CD8-positive, alpha-beta T cell (primary cell): ENCODE measurements at regions of chr12 and their contacts with region 1.

Region 1: DNA sequence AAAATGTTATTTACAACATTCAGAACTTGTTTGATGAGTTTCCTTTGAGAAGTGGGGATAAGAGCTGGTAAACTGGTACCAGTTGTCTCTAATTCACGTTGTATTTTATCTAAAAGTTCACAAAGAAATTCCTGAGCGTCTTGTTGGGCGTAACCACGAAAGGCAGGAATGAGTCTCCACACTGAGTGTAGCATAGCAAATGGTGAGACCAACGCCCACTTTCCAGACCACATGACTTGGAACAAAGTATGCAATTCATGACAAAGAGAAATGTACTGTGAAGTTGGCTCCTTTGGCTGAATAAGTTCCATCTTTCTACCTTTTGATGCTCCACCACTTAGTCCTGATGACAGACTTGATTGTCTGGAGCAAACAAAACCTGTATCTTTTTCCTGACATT is 18.4 kb downstream of the USP44 start:
- DNase-seq: no peak
- ATAC-seq: no peak
- H3K4me3 ChIP-seq: no peak overlapping the region
- H3K4me3 Mint-ChIP-seq: no peak overlapping the region
- H3K27ac ChIP-seq: no peak overlapping the region
- H3K27ac Mint-ChIP-seq: no peak overlapping the region
- H3K4me1 ChIP-seq: no peaks in the 10 kb centered on the region
- H3K4me1 Mint-ChIP-seq: peaks cover 12% of the 10 kb centered on the region
- H3K27me3 ChIP-seq: no peaks in the 10 kb centered on the region
- H3K27me3 Mint-ChIP-seq: peaks cover 2% of the 10 kb centered on the region
- CTCF ChIP-seq: no peak

Region 2: GRCh38 chr12:95522692-95523091 is 10.2 kb before region 1 on chr12:
- CTCF ChIA-PET with region 1: interaction called, 12 read pairs
- POLR2A ChIA-PET with region 1: no interaction called
- intact Hi-C with region 1: no loop called
- DNase-seq: no peak
- ATAC-seq: no peak
- H3K4me3 ChIP-seq: no peak overlapping the region
- H3K4me3 Mint-ChIP-seq: no peak overlapping the region
- H3K27ac ChIP-seq: no peak overlapping the region
- H3K27ac Mint-ChIP-seq: no peak overlapping the region
- H3K4me1 ChIP-seq: no peaks in the 10 kb centered on the region
- H3K4me1 Mint-ChIP-seq: no peaks in the 10 kb centered on the region
- H3K27me3 ChIP-seq: no peaks in the 10 kb centered on the region
- H3K27me3 Mint-ChIP-seq: no peaks in the 10 kb centered on the region
- CTCF ChIP-seq: no peak